SK-N-SH (cell line): ENCODE measurements at regions of chr6 and their contacts with region 1.

Region 1: DNA sequence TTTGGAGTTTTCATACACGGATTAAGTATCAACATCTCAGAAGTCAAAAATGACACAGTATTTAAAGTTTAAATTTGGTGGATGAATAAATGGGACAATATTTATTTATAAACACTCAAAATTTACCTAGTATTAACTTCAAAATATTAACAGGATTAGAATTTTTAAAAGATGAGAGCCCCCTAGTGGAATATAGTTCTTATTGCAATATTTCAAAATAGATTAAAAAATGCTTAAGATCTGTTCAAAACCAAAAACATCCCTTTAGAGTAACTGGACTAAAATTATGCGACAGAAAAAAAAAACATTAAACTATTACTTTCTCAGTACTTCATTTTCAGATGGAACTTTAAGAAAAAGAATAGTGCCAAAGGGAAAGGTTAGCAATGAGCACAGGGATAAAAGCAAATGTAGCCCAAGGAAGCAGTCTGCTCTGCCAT is 56.6 kb downstream of the SNX14 start:
- DNase-seq: peak; percentile 14
- H3K4me3 ChIP-seq: no peak overlapping the region; a peak in 1 of 4 replicates
- H3K27ac ChIP-seq: peak overlapping the region in 1 of 2 experiments; percentile 20; a peak in 1 of 4 replicates
- H3K4me1 ChIP-seq: no peaks in the 10 kb centered on the region
- H3K27me3 ChIP-seq: no peaks in the 10 kb centered on the region
- CTCF ChIP-seq: peak; percentile 85
- EP300 ChIP-seq: no peak
- RAD21 ChIP-seq: peak; percentile 18; the same call in 1 of the 2 replicates

Region 2: GRCh38 chr6:85551264-85551663 is 14.2 kb after region 1 on chr6:
- CTCF ChIA-PET with region 1: interaction called, 10 read pairs
- POLR2A ChIA-PET with region 1: no interaction called
- DNase-seq: peak; percentile 20
- H3K4me3 ChIP-seq: no peak overlapping the region
- H3K27ac ChIP-seq: no peak overlapping the region
- H3K4me1 ChIP-seq: no peaks in the 10 kb centered on the region
- H3K27me3 ChIP-seq: no peaks in the 10 kb centered on the region
- CTCF ChIP-seq: no peak
- EP300 ChIP-seq: no peak
- RAD21 ChIP-seq: no peak

Region 3: DNA sequence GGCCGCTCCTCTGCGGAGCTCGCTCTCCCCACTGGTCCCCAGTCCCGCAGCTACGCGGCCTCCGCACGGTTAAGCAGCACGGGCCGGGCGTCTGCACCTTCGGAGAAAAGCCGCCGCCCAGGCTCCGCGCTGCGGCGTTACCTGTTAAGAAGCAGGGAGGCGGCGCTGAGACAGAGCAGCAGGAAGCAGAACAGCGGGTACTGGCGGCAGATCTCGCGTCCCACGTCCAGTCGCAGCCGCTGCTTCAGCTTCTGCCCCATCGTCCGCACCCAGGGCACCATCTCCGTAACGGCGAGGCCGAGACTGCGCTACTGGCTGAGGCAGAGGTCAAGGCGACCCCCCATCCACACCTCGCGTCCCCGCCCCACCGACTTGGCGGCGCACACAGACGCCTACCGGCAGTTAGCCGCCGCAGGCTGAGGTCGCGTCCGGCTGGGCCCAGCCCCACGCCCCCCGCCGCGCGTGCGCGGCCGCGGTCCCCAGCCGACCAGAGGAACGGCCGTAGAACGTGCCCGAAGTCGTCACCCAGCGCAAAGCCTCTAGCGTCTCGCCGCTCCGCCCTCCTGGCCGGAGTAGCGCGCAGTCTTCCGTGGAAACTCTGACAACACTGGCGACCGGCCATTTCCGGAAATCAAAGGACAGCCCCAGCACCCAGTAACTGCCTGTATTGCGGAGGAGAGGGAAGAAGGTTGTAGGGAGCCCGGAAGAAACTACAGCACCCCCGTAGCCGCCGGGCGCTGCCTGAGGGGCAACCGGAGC is 56.5 kb after region 1 on chr6 and contains the start of gene SNX14:
- CTCF ChIA-PET with region 1: interaction called, 13 read pairs
- POLR2A ChIA-PET with region 1: no interaction called
- DNase-seq: peak; percentile 94
- H3K4me3 ChIP-seq: peak within 1 kb of the TSS; percentile 88 to 92
- H3K27ac ChIP-seq: peak within 1 kb of the TSS; percentile 93 to 96
- H3K4me1 ChIP-seq: peaks cover 0 to 6% of the 10 kb centered on the region in 2 experiments; a peak in 2 of 4 replicates
- H3K27me3 ChIP-seq: no peaks in the 10 kb centered on the region
- CTCF ChIP-seq: peak; percentile 19; the same call in 1 of the 2 replicates
- EP300 ChIP-seq: no peak
- RAD21 ChIP-seq: no peak
- polyA plus RNA-seq, gene SNX14: 40.4 and 53.9 TPM in 2 replicates

Region 4: GRCh38 chr6:85892346-85892745 is 355.3 kb after region 1 on chr6:
- CTCF ChIA-PET with region 1: no interaction called
- POLR2A ChIA-PET with region 1: no interaction called
- DNase-seq: no peak
- H3K4me3 ChIP-seq: no peak overlapping the region
- H3K27ac ChIP-seq: no peak overlapping the region
- H3K4me1 ChIP-seq: no peaks in the 10 kb centered on the region
- H3K27me3 ChIP-seq: no peaks in the 10 kb centered on the region
- CTCF ChIP-seq: no peak
- EP300 ChIP-seq: no peak
- RAD21 ChIP-seq: no peak